ENCODE measurements at regions of chr5 and their contacts with region 1.

Region 1: DNA sequence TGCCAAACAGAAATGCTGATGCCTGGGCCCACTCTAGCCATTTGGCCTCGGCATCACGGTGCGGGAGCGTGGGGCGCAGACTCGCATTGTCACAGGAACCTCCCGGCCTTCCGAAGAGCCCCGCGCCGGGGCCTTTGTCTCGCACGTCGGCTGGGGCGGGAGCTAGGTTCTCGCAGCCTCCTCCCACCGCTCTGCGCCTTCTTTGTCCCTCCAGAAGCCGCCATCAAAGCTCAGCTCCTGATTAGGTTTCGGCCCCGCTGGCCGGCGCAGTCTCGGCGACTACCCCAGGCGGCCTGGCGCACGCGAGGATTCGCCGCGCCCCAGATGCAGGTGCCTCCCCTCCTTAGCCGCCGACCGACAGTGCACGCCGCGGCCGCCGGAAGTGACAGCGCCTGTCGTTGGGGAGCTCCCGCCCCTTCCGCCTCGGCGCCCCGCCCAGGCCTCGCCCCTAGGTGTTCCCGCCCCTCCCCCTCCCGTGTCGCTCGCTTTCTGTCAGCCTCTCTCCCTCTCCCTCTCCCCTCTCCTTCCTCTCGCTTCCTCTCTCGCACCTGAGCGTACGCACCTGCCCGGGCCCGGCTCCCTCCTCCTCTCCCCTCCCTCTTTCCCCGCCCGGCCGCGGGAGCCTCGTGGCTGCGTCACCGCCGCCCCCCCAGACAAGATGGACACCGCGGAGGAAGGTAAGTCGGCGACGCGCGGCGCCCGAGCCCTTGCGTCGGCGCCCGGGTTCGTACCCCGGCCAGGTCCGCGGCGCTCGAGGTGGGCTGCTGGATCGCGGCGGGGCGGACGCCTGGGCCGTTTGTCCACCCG is at the start of gene MARCHF6:
- DNase-seq: peak; percentile 95
- H3K4me3 Mint-ChIP-seq: peak within 1 kb of the TSS; percentile 99
- H3K27ac Mint-ChIP-seq: peak within 1 kb of the TSS; percentile 97
- H3K4me1 Mint-ChIP-seq: peaks cover 38% of the 10 kb centered on the region
- H3K27me3 Mint-ChIP-seq: no peaks in the 10 kb centered on the region
- total RNA-seq, gene MARCHF6: 101 to 109 TPM

Region 2: DNA sequence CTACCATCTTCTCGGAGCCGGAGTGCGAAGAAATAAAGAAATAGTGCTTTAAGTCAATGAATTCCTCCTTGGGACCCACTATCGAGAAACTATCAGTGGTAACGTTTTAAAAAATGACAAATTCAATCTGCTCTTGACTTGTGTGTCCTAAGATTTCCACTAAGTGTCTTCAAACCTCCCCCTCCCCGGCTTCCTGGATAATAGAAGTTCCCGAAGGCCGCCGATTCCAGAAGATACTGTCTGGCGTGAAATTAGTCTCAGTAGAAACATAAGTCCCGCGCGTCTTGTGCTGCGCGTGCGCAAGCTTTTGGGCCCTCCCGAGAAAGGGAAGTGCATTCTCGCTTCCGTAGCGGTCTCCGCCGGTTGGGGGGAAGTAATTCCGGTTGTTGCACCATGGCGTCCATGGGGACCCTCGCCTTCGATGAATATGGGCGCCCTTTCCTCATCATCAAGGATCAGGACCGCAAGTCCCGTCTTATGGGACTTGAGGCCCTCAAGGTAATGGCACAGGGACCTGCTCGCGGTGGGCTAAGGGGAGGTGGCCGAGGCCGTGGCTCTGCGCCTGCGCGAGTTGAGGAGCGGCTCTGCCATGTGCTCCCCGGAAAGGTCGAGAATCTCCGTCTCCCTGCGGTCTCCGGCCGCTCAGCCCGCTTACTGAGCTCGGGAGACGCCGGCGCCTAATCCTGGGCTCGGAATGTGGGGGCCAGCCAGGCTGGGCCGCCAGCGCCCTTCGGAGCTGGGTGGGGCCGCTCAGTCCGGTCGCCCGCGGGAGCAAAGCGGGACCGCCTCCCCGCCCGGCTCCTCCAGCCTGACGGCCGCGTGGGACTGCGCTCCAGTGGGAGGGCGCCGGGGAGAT is 103.3 kb before region 1 on chr5 and contains the start of gene CCT5:
- CTCF ChIA-PET with region 1: interaction called, 4 read pairs
- POLR2A ChIA-PET with region 1: interaction called, 55 read pairs
- DNase-seq: peak; percentile 91
- H3K4me3 Mint-ChIP-seq: peak within 1 kb of the TSS; percentile 81
- H3K27ac Mint-ChIP-seq: peak within 1 kb of the TSS; percentile 93
- H3K4me1 Mint-ChIP-seq: peaks cover 59% of the 10 kb centered on the region
- H3K27me3 Mint-ChIP-seq: no peaks in the 10 kb centered on the region
- total RNA-seq, gene CCT5: 220 to 223 TPM

Region 3: DNA sequence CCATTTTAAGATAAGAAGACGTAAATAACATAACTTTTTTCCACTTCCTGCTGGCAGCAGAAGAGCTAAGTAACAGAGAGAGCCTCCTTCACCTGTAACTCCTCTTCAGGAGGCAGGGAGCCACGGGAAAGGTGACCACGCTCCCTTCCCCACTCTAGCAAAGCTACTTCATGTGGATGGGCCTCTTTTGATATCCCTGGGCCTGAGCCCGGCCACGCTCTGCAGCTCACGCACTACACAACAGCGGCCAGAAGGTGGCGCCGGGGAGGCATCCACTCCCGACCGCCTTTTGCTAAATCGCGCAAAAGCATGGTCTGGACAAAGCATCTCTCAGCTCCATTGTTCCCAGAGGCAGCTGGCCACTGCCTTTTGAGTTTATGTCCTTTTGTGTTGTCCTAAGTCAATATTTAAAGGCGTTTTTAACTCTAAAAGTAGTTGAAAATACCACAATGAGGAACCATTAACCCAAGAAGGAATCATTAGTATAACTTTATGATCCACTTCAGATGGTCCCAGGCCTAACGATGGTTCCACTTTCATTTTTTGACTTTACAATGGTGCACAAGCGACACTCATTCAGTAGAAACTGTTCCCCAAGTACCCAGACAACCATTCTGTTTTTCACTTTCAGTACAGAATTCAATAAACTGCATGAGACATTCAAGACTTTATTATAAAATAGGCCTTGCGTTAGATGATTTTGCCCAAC is 69.4 kb before region 1 on chr5:
- CTCF ChIA-PET with region 1: interaction called, 19 read pairs
- POLR2A ChIA-PET with region 1: interaction called, 10 read pairs
- DNase-seq: peak; percentile 84
- H3K4me3 Mint-ChIP-seq: peak overlapping the region; percentile 32
- H3K27ac Mint-ChIP-seq: peak overlapping the region; percentile 48
- H3K4me1 Mint-ChIP-seq: peaks cover 15% of the 10 kb centered on the region
- H3K27me3 Mint-ChIP-seq: no peaks in the 10 kb centered on the region

Region 4: GRCh38 chr5:10364186-10364683 is 10.8 kb after region 1 on chr5:
- CTCF ChIA-PET with region 1: interaction called, 12 read pairs
- POLR2A ChIA-PET with region 1: interaction called, 5 read pairs
- DNase-seq: no peak
- H3K4me3 Mint-ChIP-seq: no peak overlapping the region
- H3K27ac Mint-ChIP-seq: no peak overlapping the region
- H3K4me1 Mint-ChIP-seq: peaks cover 21% of the 10 kb centered on the region
- H3K27me3 Mint-ChIP-seq: no peaks in the 10 kb centered on the region

Region 5: GRCh38 chr5:10387690-10388089 is 34.2 kb after region 1 on chr5:
- CTCF ChIA-PET with region 1: interaction called, 10 read pairs
- POLR2A ChIA-PET with region 1: no interaction called
- DNase-seq: no peak
- H3K4me3 Mint-ChIP-seq: no peak overlapping the region
- H3K27ac Mint-ChIP-seq: no peak overlapping the region
- H3K4me1 Mint-ChIP-seq: no peaks in the 10 kb centered on the region
- H3K27me3 Mint-ChIP-seq: no peaks in the 10 kb centered on the region

Region 6: GRCh38 chr5:10441083-10441991 is 87.9 kb after region 1 on chr5 and contains the start of gene ROPN1L:
- CTCF ChIA-PET with region 1: interaction called, 4 read pairs
- POLR2A ChIA-PET with region 1: interaction called, 42 read pairs
- DNase-seq: peak; percentile 85
- H3K4me3 Mint-ChIP-seq: peak within 1 kb of the TSS; percentile 79
- H3K27ac Mint-ChIP-seq: peak within 1 kb of the TSS; percentile 58
- H3K4me1 Mint-ChIP-seq: peaks cover 42% of the 10 kb centered on the region
- H3K27me3 Mint-ChIP-seq: peaks cover 7% of the 10 kb centered on the region
- total RNA-seq, gene ROPN1L: 5.5 to 7.5 TPM

Region 7: DNA sequence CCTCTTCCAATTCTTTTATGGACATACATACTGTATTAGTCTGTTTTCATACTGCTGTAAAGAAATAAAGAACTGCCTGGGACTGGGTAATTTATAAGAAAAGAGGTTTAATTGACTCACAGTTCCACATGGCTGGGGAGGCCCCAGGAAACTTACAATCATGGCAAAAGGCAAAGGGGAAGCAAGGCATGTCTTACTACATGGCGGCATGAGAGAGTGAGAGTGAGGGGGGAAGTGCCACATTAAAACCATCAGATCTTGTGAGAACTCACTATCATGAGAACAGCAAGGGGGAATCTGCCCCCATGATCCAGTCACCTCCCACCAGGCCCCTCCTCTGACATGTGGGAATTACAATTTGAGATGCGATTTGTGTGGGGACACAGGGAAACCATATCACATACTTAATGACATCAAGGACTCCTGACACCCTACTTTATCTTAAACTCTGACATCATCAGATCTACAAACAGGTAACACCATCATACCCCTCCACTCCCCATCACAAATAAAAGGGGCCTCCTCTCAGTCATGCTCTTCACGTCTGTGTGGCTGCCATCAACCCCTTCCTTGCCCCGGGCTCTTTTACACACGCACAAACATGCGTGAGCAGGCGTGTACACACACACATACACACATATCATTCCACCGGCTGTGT is 220.2 kb after region 1 on chr5:
- CTCF ChIA-PET with region 1: no interaction called
- POLR2A ChIA-PET with region 1: no interaction called
- DNase-seq: no peak
- H3K4me3 Mint-ChIP-seq: no peak overlapping the region
- H3K27ac Mint-ChIP-seq: no peak overlapping the region
- H3K4me1 Mint-ChIP-seq: peaks cover 16% of the 10 kb centered on the region
- H3K27me3 Mint-ChIP-seq: no peaks in the 10 kb centered on the region

Region 8: GRCh38 chr5:10635257-10635866 is 281.9 kb after region 1 on chr5:
- CTCF ChIA-PET with region 1: interaction called, 4 read pairs
- POLR2A ChIA-PET with region 1: interaction called, 16 read pairs
- DNase-seq: peak; percentile 87
- H3K4me3 Mint-ChIP-seq: peak overlapping the region; percentile 69
- H3K27ac Mint-ChIP-seq: peak overlapping the region; percentile 97
- H3K4me1 Mint-ChIP-seq: peaks cover 74% of the 10 kb centered on the region
- H3K27me3 Mint-ChIP-seq: no peaks in the 10 kb centered on the region